ENCODE measurements at regions of chr1 and their contacts with region 1.

Region 1: GRCh38 chr1:44594871-44595746 is 79.2 kb downstream of the TMEM53 start:
- DNase-seq: peak; percentile 93
- ATAC-seq: peak; percentile 93

Region 2: GRCh38 chr1:44213222-44214112 is 381.6 kb before region 1 on chr1 and contains the start of gene DMAP1:
- intact Hi-C with region 1: loop called (anchors 10 kb)
- DNase-seq: peak; percentile 89
- ATAC-seq: peak; percentile 94
- total RNA-seq, gene DMAP1: 35.9 TPM

Region 3: GRCh38 chr1:44377925-44378784 is 217.0 kb before region 1 on chr1:
- intact Hi-C with region 1: loop called (anchors 10 kb)
- DNase-seq: peak; percentile 65
- ATAC-seq: peak; percentile 26

Region 4: DNA sequence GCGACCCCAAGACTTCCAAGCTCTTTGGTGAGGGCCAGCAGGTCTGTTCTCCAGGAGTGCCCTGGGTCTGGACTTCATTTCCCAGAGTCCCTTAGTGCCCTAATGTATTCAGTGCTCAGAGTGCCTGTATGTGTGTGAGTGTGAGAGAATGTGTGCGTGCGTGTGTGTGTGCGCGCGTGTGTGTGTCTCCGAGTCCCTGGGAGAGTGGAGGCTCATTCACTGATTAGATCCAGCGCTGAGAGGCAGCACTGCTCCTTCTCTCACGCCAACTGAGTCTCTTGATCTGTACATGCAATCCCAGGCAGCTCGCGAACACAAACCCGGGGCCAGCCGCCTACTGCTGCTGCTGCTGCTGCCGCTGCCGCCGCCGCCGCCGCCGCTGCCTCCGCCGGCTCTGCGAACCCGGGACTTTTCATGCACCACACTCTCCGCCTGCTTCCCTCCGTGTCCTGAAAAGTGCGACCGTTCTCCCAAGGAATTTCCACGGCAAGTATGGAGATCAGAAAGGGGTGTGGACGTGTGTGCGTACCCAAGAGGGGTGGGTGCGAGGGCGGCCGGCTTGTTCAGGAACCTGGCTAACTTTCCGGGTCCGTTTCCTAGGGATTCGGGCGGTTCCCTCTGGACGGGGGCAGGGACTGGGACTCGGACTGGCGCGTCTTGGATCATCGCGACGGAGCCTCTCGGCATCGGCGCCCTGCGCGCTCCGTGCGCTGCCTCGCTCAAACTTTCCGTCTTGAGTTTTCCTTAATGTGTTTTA is 189.9 kb before region 1 on chr1 and contains the start of gene RNF220:
- intact Hi-C with region 1: loop called (anchors 10 kb)
- DNase-seq: peak; percentile 76
- ATAC-seq: peak; percentile 89
- total RNA-seq, gene RNF220: 60.0 TPM

Region 5: GRCh38 chr1:44500181-44501046 is 94.7 kb before region 1 on chr1:
- intact Hi-C with region 1: no loop called
- DNase-seq: no peak
- ATAC-seq: peak; percentile 76

Region 6: GRCh38 chr1:44576456-44577150 is 18.5 kb before region 1 on chr1:
- intact Hi-C with region 1: no loop called
- DNase-seq: no peak
- ATAC-seq: no peak